Activated CD4-positive, alpha-beta T cell treated with anti-CD3 and anti-CD28 coated beads, Interleukin-2, amount 10 ng/mL, durations not matched to agents 24 days and 14 days (primary cell): ENCODE measurements at regions of chrX and their contacts with region 1.

Region 1: DNA sequence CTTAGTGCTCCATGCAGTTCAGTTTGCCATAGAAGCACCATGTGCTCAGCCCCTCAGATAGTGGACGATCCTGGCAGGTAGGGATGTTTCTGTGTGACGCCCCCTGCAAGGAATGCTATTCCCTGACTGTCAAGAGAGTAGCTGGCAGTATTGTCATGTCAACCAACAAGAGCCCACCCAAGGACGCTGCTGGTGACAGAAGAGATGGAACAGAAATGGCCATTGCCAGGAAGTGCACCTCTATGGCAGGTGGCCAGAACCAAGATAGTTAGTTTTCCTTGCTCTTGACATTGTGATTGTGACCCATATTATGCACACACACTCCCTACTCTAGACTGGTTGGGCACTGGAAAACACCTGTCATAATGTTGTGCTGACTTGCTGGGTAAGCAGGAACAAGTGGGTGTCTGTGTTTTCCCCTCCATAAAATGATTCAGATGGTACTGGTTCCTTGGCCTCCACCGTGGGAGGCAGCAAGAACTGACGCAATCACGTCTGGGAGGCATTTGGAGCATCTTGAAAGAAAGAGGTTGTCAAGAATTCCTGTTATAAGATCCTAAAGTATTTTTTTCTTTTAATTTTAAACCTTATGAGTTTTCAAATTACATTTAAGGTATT is 507.9 kb downstream of the MID1IP1 start:
- DNase-seq: peak; percentile 74
- H3K4me3 Mint-ChIP-seq: peak overlapping the region; percentile 54
- H3K27ac Mint-ChIP-seq: peak overlapping the region; percentile 100
- H3K4me1 Mint-ChIP-seq: peaks cover 50% of the 10 kb centered on the region
- H3K27me3 Mint-ChIP-seq: no peaks in the 10 kb centered on the region

Region 2: GRCh38 chrX:39162322-39162735 is 146.8 kb before region 1 on chrX:
- intact Hi-C with region 1: loop called (anchors 5 kb)
- DNase-seq: peak; percentile 71
- H3K4me3 Mint-ChIP-seq: peak overlapping the region; percentile 64
- H3K27ac Mint-ChIP-seq: peak overlapping the region; percentile 78
- H3K4me1 Mint-ChIP-seq: peaks cover 39% of the 10 kb centered on the region
- H3K27me3 Mint-ChIP-seq: peaks cover 2% of the 10 kb centered on the region

Region 3: DNA sequence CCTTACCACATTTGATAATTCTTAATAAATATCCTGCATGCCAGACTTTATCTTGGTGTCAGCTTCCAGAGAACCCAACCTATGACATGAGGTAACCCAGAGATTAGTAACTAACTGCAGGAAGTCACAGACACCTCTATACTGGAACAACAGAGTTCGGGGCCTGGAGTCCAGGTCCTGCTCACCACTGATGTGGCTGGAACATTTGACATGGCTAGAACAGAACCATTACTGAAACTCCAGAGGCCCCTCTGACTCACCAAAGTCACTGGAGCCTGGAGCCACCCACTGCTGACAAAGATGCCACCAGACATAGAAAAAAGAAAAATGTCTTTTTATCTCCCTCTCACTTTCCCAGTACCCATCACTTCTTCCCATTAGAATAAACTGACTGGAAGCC is 104.2 kb before region 1 on chrX:
- intact Hi-C with region 1: loop called (anchors 1 kb)
- DNase-seq: no peak
- H3K4me3 Mint-ChIP-seq: peak overlapping the region; percentile 47
- H3K27ac Mint-ChIP-seq: peak overlapping the region; percentile 86
- H3K4me1 Mint-ChIP-seq: peaks cover 55% of the 10 kb centered on the region
- H3K27me3 Mint-ChIP-seq: no peaks in the 10 kb centered on the region

Region 4: GRCh38 chrX:39261446-39262147 is 47.5 kb before region 1 on chrX:
- intact Hi-C with region 1: loop called (anchors 1 kb)
- DNase-seq: peak; percentile 74
- H3K4me3 Mint-ChIP-seq: no peak overlapping the region
- H3K27ac Mint-ChIP-seq: peak overlapping the region; percentile 78
- H3K4me1 Mint-ChIP-seq: peaks cover 34% of the 10 kb centered on the region
- H3K27me3 Mint-ChIP-seq: no peaks in the 10 kb centered on the region

Region 5: GRCh38 chrX:39268207-39268606 is 40.9 kb before region 1 on chrX:
- intact Hi-C with region 1: loop called (anchors 1 kb)
- DNase-seq: no peak
- H3K4me3 Mint-ChIP-seq: peak overlapping the region; percentile 45
- H3K27ac Mint-ChIP-seq: peak overlapping the region; percentile 87
- H3K4me1 Mint-ChIP-seq: peaks cover 29% of the 10 kb centered on the region
- H3K27me3 Mint-ChIP-seq: no peaks in the 10 kb centered on the region

Region 6: DNA sequence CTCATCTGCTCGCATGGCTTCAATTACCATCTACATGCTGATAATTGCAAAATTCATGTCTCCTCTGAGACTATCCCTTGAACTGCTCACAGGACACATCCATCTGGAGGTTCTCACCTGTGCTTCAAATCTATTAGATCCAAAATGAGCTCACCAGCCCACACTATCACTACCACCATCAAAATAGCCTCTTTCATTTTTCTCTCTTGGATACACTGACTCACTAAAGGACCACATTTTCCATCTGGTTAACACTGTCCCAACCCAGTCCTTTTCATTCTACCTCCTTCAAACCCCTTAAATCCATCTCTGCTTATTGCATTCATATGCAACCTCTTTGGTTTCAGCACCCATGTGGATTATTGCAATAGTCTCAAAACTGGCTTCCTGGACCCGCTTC is 10.3 kb before region 1 on chrX:
- intact Hi-C with region 1: loop called (anchors 1 kb)
- DNase-seq: no peak
- H3K4me3 Mint-ChIP-seq: peak overlapping the region; percentile 13
- H3K27ac Mint-ChIP-seq: peak overlapping the region; percentile 84
- H3K4me1 Mint-ChIP-seq: peaks cover 33% of the 10 kb centered on the region
- H3K27me3 Mint-ChIP-seq: no peaks in the 10 kb centered on the region

Region 7: DNA sequence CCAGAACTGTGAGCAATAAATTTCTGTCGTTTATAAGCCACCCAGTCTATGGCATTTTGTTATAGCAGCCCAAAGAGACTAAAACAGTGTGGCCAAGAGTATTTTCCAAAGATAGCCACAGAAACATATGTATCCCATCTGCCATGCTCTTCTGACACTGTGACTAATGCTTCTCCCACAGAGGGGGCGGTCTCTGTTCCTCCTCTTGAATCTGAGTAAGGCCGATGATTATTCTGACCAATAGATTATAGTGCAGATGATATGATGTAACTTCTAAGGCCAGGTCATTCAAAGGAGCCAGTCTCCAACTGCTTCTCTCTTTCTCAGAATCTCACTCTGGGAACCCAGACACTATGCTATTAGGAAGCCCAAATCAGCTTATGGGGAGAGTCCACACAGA is 217.9 kb after region 1 on chrX:
- intact Hi-C with region 1: no loop called
- DNase-seq: no peak
- H3K4me3 Mint-ChIP-seq: no peak overlapping the region
- H3K27ac Mint-ChIP-seq: no peak overlapping the region
- H3K4me1 Mint-ChIP-seq: no peaks in the 10 kb centered on the region
- H3K27me3 Mint-ChIP-seq: no peaks in the 10 kb centered on the region